Heart left ventricle (tissue), 16 donors: ENCODE measurements at regions of chr19 and their contacts with region 1.

Region 1: DNA sequence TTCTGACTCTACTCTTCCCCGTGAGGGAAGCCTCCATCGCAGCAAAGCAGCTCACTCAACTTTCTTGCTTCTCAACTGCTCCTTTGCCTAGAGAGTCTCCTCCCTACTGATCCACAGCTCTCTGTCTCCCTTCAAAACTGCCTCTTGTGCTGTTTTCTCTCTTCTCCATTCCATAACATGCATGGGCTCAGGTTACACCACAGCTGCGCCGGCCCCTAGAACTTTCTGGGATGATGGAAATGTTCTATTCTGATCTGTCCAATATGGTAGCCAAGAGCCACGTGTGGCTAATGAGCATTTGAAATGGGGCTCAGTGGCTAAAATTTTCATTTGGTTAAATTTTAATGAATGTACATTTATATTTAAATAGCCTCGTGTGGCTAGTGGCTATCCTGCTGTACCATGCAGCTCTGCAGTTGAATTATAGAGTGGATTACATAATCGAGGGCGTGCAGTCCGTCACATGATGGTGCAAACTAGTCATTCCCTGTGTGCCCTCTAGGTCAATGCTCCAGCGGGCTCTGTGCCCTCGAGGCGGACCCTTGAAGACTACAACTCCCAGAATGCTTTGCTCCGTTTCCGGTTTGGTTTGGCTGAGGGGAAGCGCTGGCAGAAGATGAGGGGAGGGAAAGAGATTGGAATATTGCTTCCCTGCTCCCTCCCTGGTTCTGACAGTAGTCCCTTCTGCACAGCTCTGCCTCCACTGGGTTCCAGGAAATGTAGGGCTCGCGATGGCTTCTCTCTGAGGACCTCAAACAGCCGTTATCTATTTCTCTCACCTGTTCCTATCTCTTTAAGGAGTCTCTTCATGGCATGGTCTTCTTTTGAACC is 109.8 kb downstream of the CACNA1A start:
- DNase-seq: peak in 2 of 5 donors; percentile 27 to 30
- ATAC-seq: peak in 3 of 4 donors; percentile 26 to 48 (median 46)
- H3K4me3 ChIP-seq: no peak overlapping the region
- H3K27ac ChIP-seq: no peak overlapping the region
- H3K4me1 ChIP-seq: peaks cover 0 to 6% (median 0%) of the 10 kb centered on the region in 12 donors
- H3K27me3 ChIP-seq: peaks cover 0 to 28% (median 0%) of the 10 kb centered on the region in 9 donors
- CTCF ChIP-seq: no peak
- POLR2A ChIP-seq: no peak

Region 2: DNA sequence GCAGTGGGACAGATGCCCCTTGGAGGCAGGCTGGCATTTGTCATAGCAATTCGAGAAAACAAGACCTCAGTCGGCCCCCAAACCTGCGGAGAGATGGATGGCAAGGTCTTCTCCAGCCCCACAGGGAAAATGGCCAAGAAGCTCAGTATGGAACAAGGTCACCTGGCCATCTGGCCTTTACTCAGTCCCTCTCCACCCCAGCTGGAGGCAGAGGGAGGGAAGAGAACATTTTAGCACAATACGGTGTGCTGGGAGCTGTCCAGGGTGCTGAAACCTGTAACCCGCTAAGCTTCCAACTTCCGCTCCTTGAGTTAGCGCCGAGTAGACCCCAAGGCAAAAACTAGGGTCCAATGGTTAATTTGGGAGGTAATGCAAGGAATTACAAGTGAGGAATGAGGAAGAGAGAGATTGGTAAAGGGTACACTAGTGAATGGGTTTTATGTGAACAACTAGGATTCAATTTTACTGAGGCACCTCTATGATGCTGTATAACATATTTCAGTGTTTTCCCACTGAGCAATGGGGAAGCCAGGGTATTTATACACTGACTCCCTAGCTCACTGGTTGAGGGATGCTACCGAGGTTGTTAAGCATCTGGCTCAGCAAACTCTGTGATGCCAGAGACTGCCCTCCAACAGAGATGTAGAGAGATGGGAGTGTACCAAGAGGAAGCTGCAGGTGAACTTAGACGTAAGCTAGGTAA is 45.5 kb after region 1 on chr19:
- intact Hi-C with region 1: loop called in 1 of 10 experiments (anchors 2 kb)
- DNase-seq: peak in 2 of 5 donors; percentile 20 to 32
- ATAC-seq: peak in 1 of 4 donors; percentile 18
- H3K4me3 ChIP-seq: no peak overlapping the region
- H3K27ac ChIP-seq: no peak overlapping the region
- H3K4me1 ChIP-seq: no peaks in the 10 kb centered on the region
- H3K27me3 ChIP-seq: no peaks in the 10 kb centered on the region
- CTCF ChIP-seq: no peak
- POLR2A ChIP-seq: no peak